Endothelial cell of umbilical vein (primary cell): ENCODE measurements at regions of chr1 and their contacts with region 1.

Region 1: DNA sequence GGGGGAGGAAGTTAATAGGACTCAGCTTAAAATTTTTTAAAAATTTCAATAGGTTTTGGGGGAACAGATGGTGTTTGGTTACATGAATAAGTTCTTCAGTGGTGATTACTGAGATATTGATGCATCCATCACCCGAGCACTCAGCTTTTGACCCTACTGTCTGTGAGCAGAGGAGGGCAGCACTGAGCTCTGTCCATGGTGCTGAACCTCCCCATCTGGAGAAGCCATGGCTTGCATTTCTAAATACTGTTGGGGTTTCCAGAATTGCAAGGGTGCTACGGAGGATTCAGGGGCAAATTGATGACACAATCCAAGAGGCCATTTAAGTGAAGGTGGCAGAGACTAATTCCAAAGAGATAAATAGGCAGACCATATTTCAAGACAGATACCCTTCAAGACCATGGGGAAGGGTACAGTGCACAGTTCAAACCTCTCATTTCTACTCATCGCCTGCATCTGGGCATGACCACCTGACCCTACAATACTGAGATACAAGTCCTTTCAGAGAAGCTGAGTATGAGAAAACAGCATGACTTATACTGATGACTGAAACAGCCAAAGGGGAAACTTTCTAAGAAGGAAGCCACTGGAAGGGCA is 17.2 kb downstream of the SYT2 start:
- DNase-seq: peak; percentile 55
- H3K4me3 ChIP-seq: no peak overlapping the region
- H3K27ac ChIP-seq: no peak overlapping the region
- H3K4me1 ChIP-seq: no peaks in the 10 kb centered on the region
- H3K27me3 ChIP-seq: peaks cover 0 to under 1% of the 10 kb centered on the region in 2 experiments
- CTCF ChIP-seq: peak in 1 of 2 donors; percentile 12
- POLR2A ChIP-seq: no peak

Region 2: GRCh38 chr1:201990427-201990826 is 702.6 kb before region 1 on chr1:
- CTCF ChIA-PET with region 1: no interaction called
- POLR2A ChIA-PET with region 1: no interaction called
- dilution Hi-C with region 1: no loop called
- intact Hi-C with region 1: no loop called
- DNase-seq: peak; percentile 19
- H3K4me3 ChIP-seq: no peak overlapping the region
- H3K27ac ChIP-seq: no peak overlapping the region
- H3K4me1 ChIP-seq: no peaks in the 10 kb centered on the region
- H3K27me3 ChIP-seq: no peaks in the 10 kb centered on the region
- CTCF ChIP-seq: no peak
- POLR2A ChIP-seq: no peak

Region 3: DNA sequence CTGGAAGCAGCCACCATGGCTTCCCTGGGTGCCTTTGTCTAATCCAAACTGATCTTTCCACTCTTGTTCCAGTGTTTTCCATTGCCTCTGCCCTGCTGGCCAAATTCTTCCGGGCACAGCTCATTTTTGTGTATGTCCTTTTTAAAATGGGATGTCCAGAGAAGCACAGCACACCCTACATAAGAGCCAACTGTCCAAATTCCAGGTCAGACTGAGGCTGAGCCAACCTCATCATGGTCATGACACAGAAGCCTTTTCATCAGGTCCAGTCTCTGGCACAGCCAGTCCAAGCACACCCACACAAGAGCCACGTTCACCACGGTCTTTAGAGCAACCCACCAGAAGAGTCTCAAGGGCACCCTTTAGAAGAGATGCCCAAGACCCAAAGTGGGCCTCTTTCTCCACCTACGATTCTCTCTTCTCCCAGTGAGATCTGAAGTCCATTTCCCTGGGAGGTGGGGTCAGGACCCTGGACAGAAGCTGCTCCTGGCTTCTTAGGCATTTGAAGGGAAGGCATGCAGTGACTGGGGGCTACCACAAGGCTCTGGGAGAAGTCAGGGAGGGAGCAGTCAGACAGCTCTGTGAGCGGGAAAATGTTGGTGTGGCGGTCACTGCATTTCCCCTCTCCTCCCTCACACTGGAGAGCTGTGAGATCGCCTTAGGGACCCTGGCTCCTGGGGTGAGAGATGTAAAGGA is 36.0 kb before region 1 on chr1:
- CTCF ChIA-PET with region 1: interaction called, 5 read pairs
- POLR2A ChIA-PET with region 1: no interaction called
- dilution Hi-C with region 1: no loop called
- intact Hi-C with region 1: loop called (anchors 5 kb)
- DNase-seq: peak; percentile 26
- H3K4me3 ChIP-seq: no peak overlapping the region
- H3K27ac ChIP-seq: no peak overlapping the region
- H3K4me1 ChIP-seq: no peaks in the 10 kb centered on the region
- H3K27me3 ChIP-seq: peaks cover 10 to 12% of the 10 kb centered on the region in 2 experiments
- CTCF ChIP-seq: peak; percentile 13 to 33
- POLR2A ChIP-seq: no peak